ENCODE measurements at regions of chr13 and their contacts with region 1.

Region 1: DNA sequence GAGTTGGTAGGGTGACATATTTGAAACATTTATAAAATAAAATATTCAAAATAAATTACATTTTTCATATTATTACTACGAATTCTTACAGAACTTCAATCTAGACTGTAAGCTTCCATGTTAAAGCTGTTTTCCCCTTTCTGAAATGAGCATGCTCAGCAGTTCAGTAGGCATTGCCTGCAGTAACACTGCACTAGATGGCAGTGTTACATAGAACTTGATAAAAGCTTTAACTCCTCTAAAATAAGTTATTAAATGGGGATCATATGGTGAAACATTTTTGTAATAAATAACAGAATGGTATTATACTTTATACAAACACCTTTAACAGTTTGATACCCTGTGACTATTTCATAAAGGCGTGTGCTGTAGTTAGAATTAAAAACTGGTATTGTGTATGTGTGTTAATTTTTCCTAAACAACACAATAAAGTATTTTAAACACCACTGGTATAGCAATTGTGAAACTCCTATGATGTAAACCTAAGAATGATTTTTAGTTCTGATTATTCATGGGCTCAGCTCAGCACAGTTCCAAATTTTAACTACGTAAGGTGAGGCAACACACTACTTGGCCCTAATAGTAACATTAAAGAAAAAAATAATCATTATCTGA is 11.6 kb upstream of the GPR18 start:
- DNase-seq: peak; percentile 41
- ATAC-seq: peak; percentile 56
- H3K4me3 Mint-ChIP-seq: no peak overlapping the region
- H3K27ac Mint-ChIP-seq: no peak overlapping the region
- H3K4me1 Mint-ChIP-seq: peaks cover 70% of the 10 kb centered on the region
- H3K27me3 Mint-ChIP-seq: no peaks in the 10 kb centered on the region

Region 2: DNA sequence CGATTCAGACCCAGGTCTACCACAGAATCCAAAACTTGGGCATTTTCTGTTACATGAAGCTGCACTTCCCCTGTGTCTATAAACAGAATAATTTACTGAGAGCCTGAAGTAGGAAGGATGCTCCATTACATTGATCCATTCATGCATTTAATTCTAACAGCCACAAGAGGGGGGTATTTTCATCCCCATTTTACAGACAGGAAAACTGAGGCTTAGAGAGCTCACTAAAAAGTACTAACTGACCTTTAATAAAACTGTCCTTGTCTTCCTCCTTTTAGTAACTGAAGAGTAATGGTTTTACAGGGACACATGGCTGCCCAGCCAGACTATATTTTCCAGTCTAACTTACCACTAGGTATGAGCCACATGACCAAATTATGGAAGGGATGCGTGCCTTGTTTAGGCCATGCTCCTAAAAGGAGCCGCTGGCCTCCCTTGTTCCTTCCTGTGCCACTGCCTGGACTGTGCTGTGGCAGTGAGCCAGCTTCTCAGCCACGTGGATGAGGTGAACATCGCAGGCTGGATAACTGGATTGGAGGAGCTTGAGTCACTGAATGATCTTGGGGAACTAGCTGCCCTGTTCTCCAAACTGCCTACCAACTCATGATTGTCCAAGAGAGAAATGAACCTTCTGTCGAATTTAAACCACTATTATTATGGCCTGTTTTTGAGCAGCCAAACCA is 400.2 kb before region 1 on chr13:
- CTCF ChIA-PET with region 1: interaction called, 4 read pairs
- POLR2A ChIA-PET with region 1: no interaction called
- intact Hi-C with region 1: loop called in 1 of 2 experiments (anchors 10 kb)
- DNase-seq: no peak
- ATAC-seq: no peak
- H3K4me3 Mint-ChIP-seq: no peak overlapping the region
- H3K27ac Mint-ChIP-seq: no peak overlapping the region
- H3K4me1 Mint-ChIP-seq: peaks cover 8% of the 10 kb centered on the region
- H3K27me3 Mint-ChIP-seq: no peaks in the 10 kb centered on the region

Region 3: DNA sequence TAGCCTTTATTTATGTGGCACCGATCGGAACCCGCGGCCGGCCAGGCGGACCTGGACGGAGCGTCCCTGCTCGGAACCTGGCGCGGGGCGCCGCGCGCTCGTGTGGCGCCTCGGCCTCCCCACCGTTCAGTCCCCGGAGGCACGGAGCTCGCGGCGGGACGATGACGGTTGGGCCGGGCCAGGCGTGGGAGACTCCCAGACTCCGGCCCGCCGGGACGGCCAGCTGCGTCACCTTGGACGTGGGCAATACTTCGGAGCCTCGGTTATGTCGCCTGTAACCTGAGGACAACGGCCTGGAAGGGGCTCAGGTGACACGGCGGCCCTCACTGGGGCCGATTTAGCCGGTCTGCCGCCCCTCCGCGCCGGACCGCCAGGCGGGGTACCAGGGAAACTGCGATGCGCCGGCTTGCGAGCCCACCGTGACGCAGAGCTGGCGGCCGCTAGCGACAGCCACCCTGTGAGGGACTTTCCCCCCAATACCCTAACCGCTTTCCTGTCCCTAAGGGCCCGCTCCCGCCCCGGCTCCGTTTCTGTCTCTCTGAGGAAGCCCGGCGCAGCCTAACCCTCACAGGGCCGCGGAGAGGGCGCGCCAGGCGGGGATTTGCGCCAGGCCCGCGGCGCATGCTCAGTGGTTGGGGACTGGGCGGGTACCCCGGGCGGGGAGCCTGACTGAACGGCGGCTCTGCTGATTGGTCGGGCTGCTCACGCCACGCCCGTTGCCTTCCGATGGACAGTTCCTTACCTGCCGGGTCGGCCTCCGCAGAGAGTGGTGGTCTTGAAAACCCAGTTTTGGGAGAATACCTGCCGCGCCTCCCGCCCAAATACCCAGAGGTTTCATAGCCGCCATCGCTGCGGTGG is 182.4 kb before region 1 on chr13:
- CTCF ChIA-PET with region 1: interaction called, 3 read pairs
- POLR2A ChIA-PET with region 1: no interaction called
- intact Hi-C with region 1: loop called in 1 of 2 experiments (anchors 5 kb)
- DNase-seq: peak; percentile 96
- ATAC-seq: peak; percentile 89
- H3K4me3 Mint-ChIP-seq: peak overlapping the region; percentile 89
- H3K27ac Mint-ChIP-seq: peak overlapping the region; percentile 95
- H3K4me1 Mint-ChIP-seq: peaks cover 31% of the 10 kb centered on the region
- H3K27me3 Mint-ChIP-seq: no peaks in the 10 kb centered on the region

Region 4: DNA sequence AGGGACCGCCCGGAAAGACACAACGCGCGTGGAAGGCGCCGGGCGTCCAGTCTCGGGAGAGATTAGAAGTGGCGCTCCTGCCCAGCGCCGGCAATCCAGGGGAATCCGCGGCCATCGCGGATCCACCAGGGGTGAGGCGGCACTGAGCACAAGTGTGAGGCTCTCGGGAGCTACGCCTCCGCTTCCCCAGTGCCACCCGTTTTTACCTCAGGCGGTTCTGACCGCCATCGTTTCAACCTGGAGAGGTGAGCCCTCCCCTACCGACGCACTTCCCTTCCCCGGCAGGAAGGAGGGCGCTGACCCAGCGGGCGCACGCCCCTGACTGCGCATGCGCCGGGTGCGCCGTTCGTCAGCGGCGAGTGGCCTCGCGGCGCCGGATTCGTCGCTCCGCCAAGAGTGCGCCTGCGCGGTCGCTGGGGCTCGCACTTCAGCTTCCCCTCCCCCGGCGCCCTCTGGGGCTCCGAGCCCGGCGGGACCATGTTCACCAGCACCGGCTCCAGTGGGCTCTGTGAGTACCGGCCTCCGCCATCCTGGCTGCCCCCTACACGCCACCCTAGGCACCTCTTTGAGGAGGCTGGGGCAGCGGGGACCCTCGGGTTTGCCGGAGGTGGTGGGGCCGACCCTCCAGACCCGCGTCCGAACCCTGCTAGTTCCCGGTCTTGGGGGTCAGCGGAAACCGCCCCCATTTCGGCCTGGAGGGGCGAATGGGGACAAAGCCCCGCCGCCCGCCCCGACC is 69.1 kb before region 1 on chr13 and contains the start of gene UBAC2:
- CTCF ChIA-PET with region 1: interaction called, 17 read pairs
- POLR2A ChIA-PET with region 1: interaction called, 8 read pairs
- intact Hi-C with region 1: loop called in 1 of 2 experiments (anchors 1 kb)
- DNase-seq: peak; percentile 98
- ATAC-seq: peak; percentile 77
- H3K4me3 Mint-ChIP-seq: peak within 1 kb of the TSS; percentile 82
- H3K27ac Mint-ChIP-seq: peak within 1 kb of the TSS; percentile 97
- H3K4me1 Mint-ChIP-seq: peaks cover 62% of the 10 kb centered on the region
- H3K27me3 Mint-ChIP-seq: no peaks in the 10 kb centered on the region
- total RNA-seq, gene UBAC2: 48.4 to 56.3 TPM

Region 5: GRCh38 chr13:99296398-99296797 is 26.7 kb after region 1 on chr13:
- CTCF ChIA-PET with region 1: interaction called, 99 read pairs
- POLR2A ChIA-PET with region 1: interaction called, 8 read pairs
- intact Hi-C with region 1: no loop called
- DNase-seq: no peak
- ATAC-seq: peak; percentile 54
- H3K4me3 Mint-ChIP-seq: peak overlapping the region; percentile 58
- H3K27ac Mint-ChIP-seq: peak overlapping the region; percentile 96
- H3K4me1 Mint-ChIP-seq: peaks cover 86% of the 10 kb centered on the region
- H3K27me3 Mint-ChIP-seq: no peaks in the 10 kb centered on the region

Region 6: DNA sequence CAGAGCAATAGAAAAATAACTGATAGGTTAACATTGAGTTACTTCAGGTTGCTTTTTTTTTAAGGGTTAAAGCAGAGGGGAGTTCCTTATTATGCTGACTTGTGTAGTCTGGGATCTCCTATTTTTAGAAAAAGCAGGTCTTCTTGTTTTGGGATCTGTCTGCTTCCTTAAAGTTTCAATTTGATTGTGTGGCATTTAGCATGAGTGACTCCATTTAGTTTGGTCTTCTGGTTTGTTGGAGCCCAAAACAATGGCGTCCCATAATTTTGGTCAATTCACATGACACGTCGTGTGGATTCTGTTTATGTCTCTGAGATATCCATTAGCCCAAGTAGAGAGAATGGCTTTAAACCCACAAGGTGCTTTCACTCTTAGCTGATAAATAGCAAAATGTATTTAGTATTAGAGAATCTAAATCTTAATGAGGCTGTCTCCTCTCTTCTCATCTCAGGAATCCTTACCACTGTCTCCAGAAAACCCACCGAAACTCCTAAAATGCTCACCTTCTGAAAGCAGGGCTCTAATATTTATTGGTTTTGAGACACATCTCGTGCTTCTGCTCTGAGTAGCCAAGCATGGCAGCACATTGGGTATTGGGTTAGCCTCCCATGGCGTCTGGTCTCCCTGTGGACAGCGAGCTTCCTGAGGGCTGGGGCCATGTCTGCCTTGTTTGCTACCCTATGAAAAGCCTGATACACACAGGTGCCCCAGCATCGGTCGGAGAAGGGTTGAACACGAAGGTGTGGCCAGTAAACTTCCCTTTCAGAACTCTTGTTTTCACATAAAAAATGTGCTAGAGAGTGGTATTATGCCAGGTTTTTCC is 104.6 kb after region 1 on chr13:
- CTCF ChIA-PET with region 1: interaction called, 53 read pairs
- POLR2A ChIA-PET with region 1: no interaction called
- intact Hi-C with region 1: no loop called
- DNase-seq: no peak
- ATAC-seq: no peak
- H3K4me3 Mint-ChIP-seq: no peak overlapping the region
- H3K27ac Mint-ChIP-seq: peak overlapping the region; percentile 53
- H3K4me1 Mint-ChIP-seq: peaks cover 84% of the 10 kb centered on the region
- H3K27me3 Mint-ChIP-seq: no peaks in the 10 kb centered on the region

Region 7: GRCh38 chr13:99425485-99426341 is 156.0 kb after region 1 on chr13:
- CTCF ChIA-PET with region 1: interaction called, 14 read pairs
- POLR2A ChIA-PET with region 1: no interaction called
- intact Hi-C with region 1: no loop called
- DNase-seq: peak; percentile 80
- ATAC-seq: peak; percentile 37
- H3K4me3 Mint-ChIP-seq: peak overlapping the region; percentile 65
- H3K27ac Mint-ChIP-seq: peak overlapping the region; percentile 93
- H3K4me1 Mint-ChIP-seq: peaks cover 67% of the 10 kb centered on the region
- H3K27me3 Mint-ChIP-seq: no peaks in the 10 kb centered on the region

Measured in activated CD4-positive, alpha-beta T cell treated with anti-CD3 and anti-CD28 coated beads for 36 hours (primary cell).